Ascending aorta (tissue), 2 donors: ENCODE measurements at regions of chr14 and their contacts with region 1.

Region 1: GRCh38 chr14:33914676-33915516 is 36.0 kb downstream of the EGLN3 start:
- DNase-seq: peak in 1 of 2 donors; percentile 74
- H3K4me3 ChIP-seq: no peak overlapping the region
- H3K27ac ChIP-seq: peak overlapping the region; percentile 34 to 66
- H3K4me1 ChIP-seq: peaks cover 0 to 14% of the 10 kb centered on the region in 2 donors
- H3K27me3 ChIP-seq: no peaks in the 10 kb centered on the region
- CTCF ChIP-seq: no peak

Region 2: GRCh38 chr14:33950320-33951182 is 35.7 kb after region 1 on chr14 and contains the start of gene EGLN3:
- intact Hi-C with region 1: loop called (anchors 1 kb)
- DNase-seq: peak; percentile 40 to 94
- H3K4me3 ChIP-seq: peak within 1 kb of the TSS; percentile 64 to 88
- H3K27ac ChIP-seq: peak within 1 kb of the TSS; percentile 78 to 79
- H3K4me1 ChIP-seq: peaks cover 0 to 8% of the 10 kb centered on the region in 2 donors
- H3K27me3 ChIP-seq: no peaks in the 10 kb centered on the region
- CTCF ChIP-seq: no peak
- total RNA-seq, gene EGLN3: 5.9 TPM

Region 3: DNA sequence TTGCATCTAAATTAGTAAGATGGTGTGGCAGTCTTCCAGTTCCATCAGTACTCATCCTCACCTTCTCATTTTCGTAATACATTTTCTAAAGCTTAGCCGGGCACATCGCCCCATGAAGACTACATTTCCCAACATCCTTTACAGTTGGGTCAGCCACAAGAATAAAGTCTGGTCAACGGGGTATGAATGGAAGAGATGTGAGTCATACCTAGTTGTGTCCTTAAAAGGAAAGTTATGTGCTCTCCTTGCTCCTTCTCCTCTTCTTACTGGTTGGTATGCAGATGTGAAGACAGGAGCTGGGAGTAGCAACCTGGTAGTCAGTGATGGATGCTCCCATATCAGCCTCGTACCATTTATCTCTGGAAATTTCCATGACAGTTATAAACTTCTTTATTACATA is 71.9 kb after region 1 on chr14:
- intact Hi-C with region 1: loop called (anchors 5 kb)
- DNase-seq: no peak
- H3K4me3 ChIP-seq: no peak overlapping the region
- H3K27ac ChIP-seq: peak overlapping the region; percentile 42 to 45
- H3K4me1 ChIP-seq: no peaks in the 10 kb centered on the region
- H3K27me3 ChIP-seq: no peaks in the 10 kb centered on the region
- CTCF ChIP-seq: no peak